Spleen (tissue), 13 donors: ENCODE measurements at regions of chr16 and their contacts with region 1.

Region 1: GRCh38 chr16:87778830-87779579 is 13.2 kb upstream of the KLHDC4 start:
- DNase-seq: peak; percentile 98
- H3K4me3 ChIP-seq: peak overlapping the region in 1 of 8 donors; percentile 23
- H3K27ac ChIP-seq: peak overlapping the region in 5 of 8 donors; percentile 53 to 68 (median 66)
- H3K4me1 ChIP-seq: peaks cover 30 to 53% (median 39%) of the 10 kb centered on the region in 6 donors
- H3K27me3 ChIP-seq: peaks cover 0 to 25% (median 0%) of the 10 kb centered on the region in 7 donors
- CTCF ChIP-seq: peak; percentile 95 to 100 (median 98)
- POLR2A ChIP-seq: no peak

Region 2: DNA sequence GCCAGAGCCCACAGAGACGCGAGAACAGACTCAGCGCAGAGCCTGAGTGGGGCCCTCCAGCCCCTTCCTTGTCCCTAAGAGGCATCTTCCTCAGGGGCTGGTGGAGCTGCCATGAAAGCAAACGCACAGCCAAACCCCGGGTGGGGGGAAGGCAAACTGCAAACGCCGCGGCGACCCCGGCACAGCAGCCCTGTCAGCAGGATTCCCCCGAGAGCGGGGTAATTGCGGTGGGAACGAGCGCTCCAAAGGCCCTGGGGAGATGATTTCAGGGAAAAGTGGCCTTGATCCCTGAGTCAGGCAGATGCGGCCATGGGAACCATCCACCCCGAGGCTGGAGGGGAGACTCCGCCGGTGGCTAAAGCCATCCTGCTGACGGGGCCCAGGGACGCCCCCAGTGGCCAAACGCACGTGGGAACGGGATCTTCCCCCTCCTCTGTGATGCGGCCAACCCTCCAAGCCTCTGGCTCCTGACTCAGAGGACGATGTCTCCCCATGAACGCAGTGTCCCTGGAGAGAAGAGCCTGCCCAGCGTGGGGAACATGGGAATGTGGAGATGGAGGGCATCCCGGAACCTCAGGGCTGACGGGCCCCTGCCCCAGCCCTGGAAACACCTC is 65.2 kb after region 1 on chr16:
- intact Hi-C with region 1: loop called (anchors 10 kb)
- DNase-seq: no peak
- H3K4me3 ChIP-seq: no peak overlapping the region
- H3K27ac ChIP-seq: no peak overlapping the region
- H3K4me1 ChIP-seq: peaks cover 0 to 51% (median 3%) of the 10 kb centered on the region in 6 donors
- H3K27me3 ChIP-seq: no peaks in the 10 kb centered on the region
- CTCF ChIP-seq: no peak
- POLR2A ChIP-seq: no peak

Region 3: DNA sequence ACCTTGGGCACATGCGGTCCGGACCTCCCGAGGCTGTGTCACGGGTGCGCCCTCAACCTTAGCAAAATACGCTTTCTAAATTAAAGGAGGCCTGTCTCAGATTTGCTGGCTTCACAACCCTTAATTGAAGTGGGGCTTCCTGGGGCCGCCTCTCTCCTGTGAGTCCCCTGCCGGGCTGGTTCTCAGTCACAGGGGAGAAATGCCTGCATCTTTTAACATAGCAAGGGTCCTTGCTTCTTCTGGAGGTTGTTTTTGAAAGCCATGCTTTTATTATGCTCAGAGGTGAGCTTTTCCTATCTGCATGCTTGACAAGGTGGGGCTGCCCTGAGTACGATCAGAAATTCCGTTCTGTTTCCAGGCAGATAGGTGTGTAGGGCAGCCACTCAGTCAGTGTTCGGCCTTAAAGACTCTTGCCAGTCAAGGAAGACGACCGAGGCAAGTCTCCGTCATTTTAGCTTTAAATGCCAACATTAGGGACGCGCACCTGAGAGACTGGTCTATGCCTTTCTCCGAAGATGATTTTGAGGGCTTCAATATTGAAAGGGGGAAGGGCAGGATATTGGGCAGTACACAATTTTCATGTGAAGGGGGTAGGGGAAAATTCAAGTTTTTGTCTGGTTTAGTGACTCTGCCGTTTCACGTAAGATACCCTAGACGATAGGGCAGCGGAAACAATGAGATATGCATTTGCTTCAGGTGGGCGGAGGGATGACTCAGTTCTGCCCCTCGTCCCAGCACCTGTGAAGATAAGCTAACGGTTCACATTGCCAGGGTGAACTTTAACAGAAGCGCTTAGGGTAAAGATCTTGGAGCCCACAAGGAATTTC is 95.8 kb after region 1 on chr16:
- intact Hi-C with region 1: loop called (anchors 2 kb)
- DNase-seq: no peak
- H3K4me3 ChIP-seq: no peak overlapping the region
- H3K27ac ChIP-seq: no peak overlapping the region
- H3K4me1 ChIP-seq: peaks cover 0 to 22% (median 9%) of the 10 kb centered on the region in 6 donors
- H3K27me3 ChIP-seq: peaks cover 0 to 53% (median 0%) of the 10 kb centered on the region in 7 donors
- CTCF ChIP-seq: no peak
- POLR2A ChIP-seq: no peak

Region 4: GRCh38 chr16:87895641-87896141 is 116.7 kb after region 1 on chr16:
- intact Hi-C with region 1: loop called (anchors 10 kb)
- DNase-seq: no peak
- H3K4me3 ChIP-seq: no peak overlapping the region
- H3K27ac ChIP-seq: peak overlapping the region in 3 of 8 donors; percentile 26 to 48 (median 45)
- H3K4me1 ChIP-seq: peaks cover 0 to 37% (median 19%) of the 10 kb centered on the region in 6 donors
- H3K27me3 ChIP-seq: peaks cover 0 to 30% (median 0%) of the 10 kb centered on the region in 7 donors
- CTCF ChIP-seq: no peak
- POLR2A ChIP-seq: no peak